ENCODE measurements at regions of chr18 and their contacts with region 1.

Region 1: DNA sequence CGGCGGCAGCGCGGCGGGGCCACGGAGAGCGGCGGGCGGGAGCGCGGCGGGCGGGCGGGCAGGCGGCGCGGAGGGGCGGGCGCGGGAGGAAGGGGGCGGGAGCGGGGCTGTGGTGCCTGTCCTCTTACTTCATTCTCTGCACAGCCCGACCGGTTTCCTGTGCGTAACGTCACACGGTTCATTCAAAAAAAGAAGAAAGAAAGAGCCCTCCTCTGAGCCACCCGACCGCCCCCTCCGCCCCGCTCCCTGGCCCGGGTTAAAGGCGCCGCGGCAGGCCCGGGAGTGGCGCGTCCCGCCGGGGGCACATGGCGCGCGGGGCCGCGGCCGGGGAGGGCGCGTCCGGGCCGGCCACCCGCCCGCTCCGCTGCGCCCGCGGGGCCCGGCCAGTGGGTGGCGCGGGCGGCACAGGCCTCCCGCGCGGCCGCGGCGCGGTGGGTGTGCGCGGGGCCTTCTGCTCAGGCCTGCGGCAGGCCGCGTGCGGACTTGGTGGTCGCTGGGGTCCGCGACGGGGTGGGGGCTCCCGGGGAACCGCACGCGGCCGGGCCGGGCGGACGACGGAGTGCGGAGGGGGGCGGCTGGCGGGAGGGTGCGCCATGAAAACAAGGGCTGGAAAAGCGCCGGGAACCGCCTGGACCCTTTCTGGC is 599 bp upstream of the BCL2 start:
- DNase-seq: peak; percentile 73 to 95 (median 88)
- ATAC-seq: peak; percentile 80
- H3K4me3 ChIP-seq: peak overlapping the region; percentile 53 to 56
- H3K4me3 Mint-ChIP-seq: peak overlapping the region; percentile 88
- H3K27ac ChIP-seq: peak overlapping the region in 1 of 2 experiments; percentile 29
- H3K27ac Mint-ChIP-seq: peak overlapping the region; percentile 94
- H3K4me1 ChIP-seq: peaks cover 16% of the 10 kb centered on the region
- H3K4me1 Mint-ChIP-seq: peaks cover 42% of the 10 kb centered on the region
- H3K27me3 ChIP-seq: no peaks in the 10 kb centered on the region
- H3K27me3 Mint-ChIP-seq: no peaks in the 10 kb centered on the region
- CTCF ChIP-seq: no peak

Region 2: GRCh38 chr18:62714671-62715435 is 605.3 kb before region 1 on chr18:
- CTCF ChIA-PET with region 1: interaction called, 3 read pairs
- POLR2A ChIA-PET with region 1: no interaction called
- intact Hi-C with region 1: loop called in 1 of 2 experiments (anchors 5 kb)
- DNase-seq: peak; percentile 78 to 97 (median 92)
- ATAC-seq: peak; percentile 71
- H3K4me3 ChIP-seq: peak overlapping the region; percentile 64 to 71
- H3K4me3 Mint-ChIP-seq: peak overlapping the region; percentile 97
- H3K27ac ChIP-seq: peak overlapping the region; percentile 80 to 89
- H3K27ac Mint-ChIP-seq: peak overlapping the region; percentile 99
- H3K4me1 ChIP-seq: peaks cover 15% of the 10 kb centered on the region
- H3K4me1 Mint-ChIP-seq: peaks cover 37% of the 10 kb centered on the region
- H3K27me3 ChIP-seq: no peaks in the 10 kb centered on the region
- H3K27me3 Mint-ChIP-seq: no peaks in the 10 kb centered on the region
- CTCF ChIP-seq: peak; percentile 77

Region 3: DNA sequence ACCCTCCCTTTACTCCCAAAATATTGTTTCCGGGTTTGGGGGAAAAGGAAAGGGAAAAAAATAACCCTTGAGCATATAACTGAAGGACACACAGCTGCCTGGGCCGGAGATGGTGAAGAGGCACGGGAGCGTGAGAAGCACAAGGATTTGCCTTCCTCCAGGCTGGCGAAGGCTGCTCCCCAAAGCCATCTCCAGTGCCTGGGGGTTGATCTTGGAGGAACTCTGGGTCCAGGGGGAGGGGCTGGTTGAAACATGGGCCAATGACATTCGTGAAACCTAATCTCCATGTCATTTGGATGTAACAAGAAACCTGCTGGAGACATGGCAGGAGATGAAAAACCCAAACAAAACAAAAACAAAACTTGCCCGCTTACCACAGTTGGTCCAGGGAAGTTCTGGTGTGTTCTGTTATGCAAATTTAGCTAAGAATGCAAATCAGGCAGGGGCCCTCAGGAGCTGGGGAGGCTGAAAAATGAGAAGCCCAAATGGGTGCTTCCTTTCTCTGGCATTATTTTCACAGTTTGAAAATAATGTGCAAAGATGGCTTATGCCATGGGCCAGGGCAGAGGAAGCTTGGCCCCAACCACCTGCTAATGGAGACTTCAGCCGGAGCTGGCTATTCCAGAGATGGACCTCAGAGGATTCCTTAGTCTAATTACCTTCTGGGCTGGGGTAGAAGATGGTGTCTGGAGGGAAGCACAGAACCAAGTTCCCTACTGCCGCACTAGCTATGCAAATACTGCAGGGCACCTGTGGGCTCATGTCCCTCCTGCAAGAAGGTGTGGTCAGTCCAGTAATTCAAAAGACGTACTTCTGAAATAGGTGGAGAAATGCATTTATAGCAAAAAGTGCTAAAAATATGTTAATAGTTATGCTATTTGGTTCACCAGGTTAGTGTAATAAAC is 181.5 kb before region 1 on chr18:
- CTCF ChIA-PET with region 1: interaction called, 47 read pairs
- POLR2A ChIA-PET with region 1: interaction called, 6 read pairs
- intact Hi-C with region 1: no loop called
- DNase-seq: peak in 1 of 9 experiments; percentile 15
- ATAC-seq: peak; percentile 14
- H3K4me3 ChIP-seq: peak overlapping the region; percentile 29 to 35
- H3K4me3 Mint-ChIP-seq: peak overlapping the region; percentile 88
- H3K27ac ChIP-seq: peak overlapping the region; percentile 4 to 56
- H3K27ac Mint-ChIP-seq: peak overlapping the region; percentile 93
- H3K4me1 ChIP-seq: peaks cover 46% of the 10 kb centered on the region
- H3K4me1 Mint-ChIP-seq: peaks cover 50% of the 10 kb centered on the region
- H3K27me3 ChIP-seq: no peaks in the 10 kb centered on the region
- H3K27me3 Mint-ChIP-seq: no peaks in the 10 kb centered on the region
- CTCF ChIP-seq: no peak

Region 4: GRCh38 chr18:63199743-63200241 is 120.4 kb before region 1 on chr18:
- CTCF ChIA-PET with region 1: interaction called, 14 read pairs
- POLR2A ChIA-PET with region 1: interaction called, 7 read pairs
- intact Hi-C with region 1: loop called (anchors 2 kb)
- DNase-seq: peak in 6 of 9 experiments; percentile 35 to 70 (median 56)
- ATAC-seq: peak; percentile 67
- H3K4me3 ChIP-seq: peak overlapping the region; percentile 54 to 70
- H3K4me3 Mint-ChIP-seq: no peak overlapping the region
- H3K27ac ChIP-seq: peak overlapping the region; percentile 60 to 72
- H3K27ac Mint-ChIP-seq: no peak overlapping the region
- H3K4me1 ChIP-seq: peaks cover 68% of the 10 kb centered on the region
- H3K4me1 Mint-ChIP-seq: peaks cover 39% of the 10 kb centered on the region
- H3K27me3 ChIP-seq: no peaks in the 10 kb centered on the region
- H3K27me3 Mint-ChIP-seq: no peaks in the 10 kb centered on the region
- CTCF ChIP-seq: no peak

Region 5: GRCh38 chr18:63237881-63238667 is 82.1 kb before region 1 on chr18:
- CTCF ChIA-PET with region 1: interaction called, 5 read pairs
- POLR2A ChIA-PET with region 1: no interaction called
- intact Hi-C with region 1: loop called in 1 of 2 experiments (anchors 5 kb)
- DNase-seq: no peak
- ATAC-seq: no peak
- H3K4me3 ChIP-seq: no peak overlapping the region
- H3K4me3 Mint-ChIP-seq: no peak overlapping the region
- H3K27ac ChIP-seq: no peak overlapping the region
- H3K27ac Mint-ChIP-seq: no peak overlapping the region
- H3K4me1 ChIP-seq: peaks cover 22% of the 10 kb centered on the region
- H3K4me1 Mint-ChIP-seq: peaks cover 53% of the 10 kb centered on the region
- H3K27me3 ChIP-seq: no peaks in the 10 kb centered on the region
- H3K27me3 Mint-ChIP-seq: no peaks in the 10 kb centered on the region
- CTCF ChIP-seq: no peak

Region 6: DNA sequence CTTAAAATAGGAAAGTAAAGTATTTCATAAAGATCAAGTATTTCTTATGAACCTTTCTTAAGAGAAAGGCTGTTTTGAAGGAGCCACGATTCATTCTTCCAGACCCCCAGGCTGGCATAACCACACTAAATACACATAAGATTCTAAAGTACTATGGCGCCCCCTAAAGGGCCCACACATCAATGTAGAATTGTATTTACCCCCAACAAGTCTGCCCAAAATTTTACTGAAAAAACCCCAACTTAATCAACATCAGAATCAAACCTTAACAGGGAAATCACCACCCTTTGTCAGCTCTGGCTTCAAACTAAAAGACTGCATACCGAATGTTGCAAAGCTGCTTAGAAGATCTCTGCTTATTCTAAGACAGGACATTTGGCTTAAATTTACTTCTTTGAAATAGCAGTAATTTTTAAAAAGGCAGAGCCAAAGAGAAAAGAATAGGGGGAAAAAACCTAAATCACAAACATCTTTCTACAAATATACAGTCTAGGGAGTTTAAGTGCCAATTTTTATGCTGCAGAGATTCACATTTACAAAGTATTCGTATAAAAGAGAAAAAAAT is 19.8 kb after region 1 on chr18:
- CTCF ChIA-PET with region 1: interaction called, 20 read pairs
- POLR2A ChIA-PET with region 1: no interaction called
- intact Hi-C with region 1: no loop called
- DNase-seq: peak in 8 of 9 experiments; percentile 10 to 75 (median 45)
- ATAC-seq: peak; percentile 67
- H3K4me3 ChIP-seq: no peak overlapping the region
- H3K4me3 Mint-ChIP-seq: no peak overlapping the region
- H3K27ac ChIP-seq: no peak overlapping the region
- H3K27ac Mint-ChIP-seq: no peak overlapping the region
- H3K4me1 ChIP-seq: no peaks in the 10 kb centered on the region
- H3K4me1 Mint-ChIP-seq: peaks cover 4% of the 10 kb centered on the region
- H3K27me3 ChIP-seq: no peaks in the 10 kb centered on the region
- H3K27me3 Mint-ChIP-seq: no peaks in the 10 kb centered on the region
- CTCF ChIP-seq: peak; percentile 75